ENCODE measurements at regions of chr17 and their contacts with region 1.

Region 1: GRCh38 chr17:8118769-8119580 is 661 bp upstream of the ALOXE3 start:
- DNase-seq: peak; percentile 78 to 92 (median 90)
- ATAC-seq: peak; percentile 76
- H3K4me3 ChIP-seq: peak overlapping the region; percentile 95
- H3K4me3 Mint-ChIP-seq: peak overlapping the region; percentile 88 to 99 (median 94)
- H3K27ac ChIP-seq: peak overlapping the region; percentile 64
- H3K27ac Mint-ChIP-seq: peak overlapping the region; percentile 94 to 100 (median 99)
- H3K4me1 ChIP-seq: peaks cover 44 to 46% of the 10 kb centered on the region in 2 donors
- H3K4me1 Mint-ChIP-seq: peaks cover 27 to 61% (median 53%) of the 10 kb centered on the region in 7 donors
- H3K27me3 ChIP-seq: peaks cover 0 to 12% of the 10 kb centered on the region in 2 donors
- H3K27me3 Mint-ChIP-seq: peaks cover 9 to 77% (median 45%) of the 10 kb centered on the region in 5 donors

Region 2: GRCh38 chr17:7834962-7835813 is 283.8 kb before region 1 on chr17:
- CTCF ChIA-PET with region 1: no interaction called
- POLR2A ChIA-PET with region 1: no interaction called
- intact Hi-C with region 1: loop called in 1 of 2 experiments (anchors 2 kb)
- DNase-seq: peak; percentile 76 to 97 (median 95)
- ATAC-seq: peak; percentile 70
- H3K4me3 ChIP-seq: peak overlapping the region; percentile 96
- H3K4me3 Mint-ChIP-seq: peak overlapping the region; percentile 91 to 99 (median 96)
- H3K27ac ChIP-seq: peak overlapping the region; percentile 96
- H3K27ac Mint-ChIP-seq: peak overlapping the region; percentile 95 to 100 (median 99)
- H3K4me1 ChIP-seq: peaks cover 29 to 38% of the 10 kb centered on the region in 2 donors
- H3K4me1 Mint-ChIP-seq: peaks cover 28 to 60% (median 44%) of the 10 kb centered on the region in 7 donors
- H3K27me3 ChIP-seq: no peaks in the 10 kb centered on the region
- H3K27me3 Mint-ChIP-seq: peaks cover 0 to 28% (median 0%) of the 10 kb centered on the region in 5 donors

Region 3: DNA sequence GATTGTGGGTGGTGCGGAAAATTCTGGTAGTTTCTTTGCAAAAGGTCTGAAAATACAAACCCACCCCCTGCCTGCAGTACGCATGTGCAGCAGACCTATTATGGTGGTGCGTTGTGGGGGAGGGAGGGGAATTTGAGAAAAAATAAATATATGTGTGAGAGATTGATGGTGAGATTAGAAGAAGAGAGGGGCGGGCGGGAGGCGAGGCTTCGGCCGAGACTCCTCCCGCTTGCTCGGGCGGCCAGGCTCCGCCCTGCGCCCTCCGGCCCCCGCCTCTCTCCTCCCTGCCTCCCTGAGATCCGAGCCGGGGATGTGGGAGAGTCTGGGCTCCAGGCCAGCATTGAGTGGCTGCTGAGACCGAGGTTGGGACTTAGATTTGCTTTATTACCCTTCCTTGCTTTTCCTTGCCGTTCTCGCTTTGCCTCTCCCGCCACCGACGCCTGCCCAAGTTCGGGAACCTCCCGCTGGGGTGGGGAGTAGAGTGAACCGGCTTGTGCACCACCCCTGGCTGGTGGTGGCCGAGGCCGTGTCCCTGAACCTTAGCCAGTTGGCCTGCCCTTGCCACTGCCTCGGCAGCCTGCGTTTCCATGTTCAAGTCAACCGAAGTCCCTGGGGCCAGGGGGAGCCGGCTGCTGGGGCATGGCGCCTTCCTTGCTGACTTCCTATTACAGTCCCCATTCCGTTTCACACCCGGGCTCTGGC is 231.3 kb before region 1 on chr17:
- CTCF ChIA-PET with region 1: no interaction called
- POLR2A ChIA-PET with region 1: interaction called, 3 read pairs
- intact Hi-C with region 1: loop called in 1 of 2 experiments (anchors 1 kb)
- DNase-seq: peak; percentile 41 to 96 (median 93)
- ATAC-seq: peak; percentile 83
- H3K4me3 ChIP-seq: peak overlapping the region; percentile 61
- H3K4me3 Mint-ChIP-seq: no peak overlapping the region
- H3K27ac ChIP-seq: peak overlapping the region; percentile 91
- H3K27ac Mint-ChIP-seq: no peak overlapping the region
- H3K4me1 ChIP-seq: peaks cover 28 to 29% of the 10 kb centered on the region in 2 donors
- H3K4me1 Mint-ChIP-seq: peaks cover 0 to 17% (median 8%) of the 10 kb centered on the region in 7 donors
- H3K27me3 ChIP-seq: no peaks in the 10 kb centered on the region
- H3K27me3 Mint-ChIP-seq: no peaks in the 10 kb centered on the region

Region 4: GRCh38 chr17:7931709-7932482 is 187.1 kb before region 1 on chr17 and contains the starts of genes CNTROB and TRAPPC1:
- CTCF ChIA-PET with region 1: no interaction called
- POLR2A ChIA-PET with region 1: no interaction called
- intact Hi-C with region 1: no loop called
- DNase-seq: peak; percentile 97 to 100 (median 99)
- ATAC-seq: peak; percentile 98
- H3K4me3 ChIP-seq: peak within 1 kb of the TSS; percentile 66
- H3K4me3 Mint-ChIP-seq: peak within 1 kb of the TSS; percentile 95 to 100 (median 96)
- H3K27ac ChIP-seq: peak within 1 kb of the TSS; percentile 88
- H3K27ac Mint-ChIP-seq: peak within 1 kb of the TSS; percentile 82 to 99 (median 96)
- H3K4me1 ChIP-seq: peaks cover 20 to 28% of the 10 kb centered on the region in 2 donors
- H3K4me1 Mint-ChIP-seq: peaks cover 31 to 60% (median 54%) of the 10 kb centered on the region in 7 donors
- H3K27me3 ChIP-seq: no peaks in the 10 kb centered on the region
- H3K27me3 Mint-ChIP-seq: no peaks in the 10 kb centered on the region
- total RNA-seq, gene CNTROB: 29.0 to 50.5 (median 33.6) TPM
- total RNA-seq, gene TRAPPC1: 71.4 to 216 (median 103) TPM

Region 5: DNA sequence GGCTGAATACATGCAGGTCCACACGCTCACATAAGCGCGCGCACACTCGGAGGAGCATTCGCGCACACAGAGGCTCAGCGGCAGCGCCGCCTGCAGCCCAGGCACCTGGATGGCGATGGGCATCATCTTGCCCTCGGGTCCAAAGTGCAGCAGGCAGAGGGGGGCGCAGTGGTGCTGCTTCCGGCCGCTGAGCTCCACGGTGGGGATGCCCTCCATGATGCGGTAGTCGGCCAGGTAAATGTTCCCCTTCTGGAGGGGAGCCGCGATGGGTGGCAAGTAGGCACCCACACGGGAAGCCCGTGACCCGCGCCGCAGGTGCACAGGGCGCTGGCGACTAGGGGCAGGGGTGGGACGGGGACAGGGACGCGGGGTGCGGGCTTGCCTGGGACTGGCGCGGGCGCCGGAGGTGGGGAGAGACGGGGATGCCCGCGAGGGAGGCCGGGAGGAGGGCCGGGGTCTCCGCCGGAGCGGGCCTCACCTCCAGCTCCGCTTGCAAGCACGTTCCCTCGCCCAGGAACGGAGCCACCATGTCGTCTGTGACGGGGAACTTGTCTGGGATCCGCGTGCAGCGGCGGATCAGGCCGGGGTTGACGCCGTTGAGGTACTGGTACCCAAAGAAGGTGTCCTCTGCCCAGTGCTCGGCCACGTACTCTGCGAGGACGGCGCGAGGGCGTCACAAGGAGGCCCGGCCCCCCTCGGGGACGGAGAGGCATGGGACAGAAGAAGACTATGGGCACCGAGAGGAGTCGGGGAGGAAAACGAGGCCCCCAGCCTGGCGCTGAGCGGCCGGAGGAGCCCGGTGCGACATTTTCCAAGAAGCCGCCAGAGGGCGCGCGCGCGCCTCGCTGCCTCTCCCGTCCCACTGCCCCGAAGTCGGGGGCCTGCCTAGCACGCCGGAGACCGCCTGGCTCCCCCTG is 39.4 kb before region 1 on chr17:
- CTCF ChIA-PET with region 1: interaction called, 248 read pairs
- POLR2A ChIA-PET with region 1: interaction called, 13 read pairs
- intact Hi-C with region 1: loop called (anchors 1 kb)
- DNase-seq: peak; percentile 63 to 89 (median 79)
- ATAC-seq: peak; percentile 90
- H3K4me3 ChIP-seq: peak overlapping the region; percentile 62
- H3K4me3 Mint-ChIP-seq: peak overlapping the region; percentile 88 to 93 (median 91)
- H3K27ac ChIP-seq: peak overlapping the region; percentile 62
- H3K27ac Mint-ChIP-seq: peak overlapping the region; percentile 42 to 92 (median 79)
- H3K4me1 ChIP-seq: peaks cover 13 to 14% of the 10 kb centered on the region in 2 donors
- H3K4me1 Mint-ChIP-seq: peaks cover 10 to 21% (median 18%) of the 10 kb centered on the region in 7 donors
- H3K27me3 ChIP-seq: peaks cover 0 to 4% of the 10 kb centered on the region in 2 donors
- H3K27me3 Mint-ChIP-seq: peaks cover 7 to 18% (median 9%) of the 10 kb centered on the region in 5 donors

Region 6: DNA sequence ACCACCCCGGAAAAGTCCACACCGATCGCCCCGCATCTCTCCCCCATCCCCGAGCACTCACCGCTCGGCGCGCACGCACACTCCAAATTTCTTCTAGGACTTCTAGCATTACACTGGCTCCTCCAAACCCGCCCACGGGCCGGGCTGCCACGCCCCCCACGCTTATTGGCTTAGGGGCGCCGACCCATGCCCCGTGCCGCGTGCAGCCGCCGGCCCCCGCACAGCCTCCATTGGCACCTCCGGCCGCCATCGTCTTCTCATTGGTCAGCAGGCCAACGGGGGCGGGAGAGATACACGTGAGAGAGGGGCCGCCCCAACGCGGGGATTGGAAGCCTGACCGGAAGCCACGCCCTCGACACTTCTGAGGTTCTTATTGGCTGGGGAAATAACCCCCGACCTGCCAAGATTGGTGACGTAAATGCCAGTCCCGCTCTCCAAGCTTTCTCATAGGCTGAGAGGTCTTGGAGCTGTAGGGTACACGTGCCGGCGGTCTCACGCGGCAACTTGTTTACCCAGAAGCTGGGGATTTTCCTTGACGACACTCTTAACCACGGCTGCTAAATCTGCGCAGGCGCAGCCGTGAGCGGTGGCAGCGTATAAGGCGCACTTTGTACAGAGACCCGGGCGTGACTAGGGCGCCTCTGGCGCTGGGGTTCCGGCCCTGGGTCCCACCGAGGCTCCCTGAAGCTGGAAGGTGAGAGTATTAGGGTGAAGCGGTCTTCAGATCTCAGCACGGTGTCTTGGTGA is 37.4 kb after region 1 on chr17:
- CTCF ChIA-PET with region 1: interaction called, 24 read pairs
- POLR2A ChIA-PET with region 1: interaction called, 28 read pairs
- intact Hi-C with region 1: loop called (anchors 1 kb)
- DNase-seq: peak; percentile 96 to 100 (median 100)
- ATAC-seq: peak; percentile 83
- H3K4me3 ChIP-seq: peak overlapping the region; percentile 93
- H3K4me3 Mint-ChIP-seq: no peak overlapping the region
- H3K27ac ChIP-seq: peak overlapping the region; percentile 97
- H3K27ac Mint-ChIP-seq: no peak overlapping the region
- H3K4me1 ChIP-seq: peaks cover 58 to 75% of the 10 kb centered on the region in 2 donors
- H3K4me1 Mint-ChIP-seq: peaks cover 33 to 73% (median 65%) of the 10 kb centered on the region in 7 donors
- H3K27me3 ChIP-seq: no peaks in the 10 kb centered on the region
- H3K27me3 Mint-ChIP-seq: no peaks in the 10 kb centered on the region

Region 7: DNA sequence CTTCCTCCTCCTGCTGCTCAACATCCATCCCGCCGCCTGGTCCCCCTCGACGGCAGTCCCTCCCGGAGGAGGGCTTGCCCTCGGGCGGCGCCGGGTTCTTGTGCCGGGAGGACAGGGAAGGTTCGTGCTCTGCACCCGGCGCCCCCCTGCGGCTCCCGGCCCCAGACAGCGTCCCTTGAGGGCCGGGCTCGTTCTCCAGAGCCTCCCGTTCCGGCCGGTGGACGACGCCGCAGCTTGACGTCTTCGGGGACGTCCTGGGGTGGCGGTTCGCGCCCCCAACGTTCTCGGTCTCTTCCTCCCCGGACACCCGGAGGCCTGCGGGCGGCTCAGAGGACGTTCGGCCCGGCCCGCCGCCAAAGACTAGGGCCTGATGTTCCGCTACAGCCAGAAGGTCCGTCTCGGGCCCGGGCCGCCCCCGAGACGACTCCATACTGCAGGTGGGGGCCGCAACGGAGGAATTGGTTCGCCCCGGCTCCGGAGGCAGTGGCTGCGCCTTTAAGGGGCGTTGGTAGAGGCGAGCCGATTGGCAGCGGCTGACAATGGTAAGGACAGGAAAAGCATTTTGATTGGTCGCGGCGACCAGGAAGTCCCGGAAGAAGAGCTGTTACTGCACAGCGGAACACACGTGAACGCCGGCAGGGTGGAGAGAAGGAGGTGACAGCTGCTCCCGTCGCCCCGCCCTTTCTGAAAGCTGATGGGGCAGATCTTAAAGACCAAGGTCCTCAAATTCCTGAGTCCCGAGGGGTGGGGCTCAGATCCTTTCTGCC is 70.9 kb after region 1 on chr17 and contains the start of gene BORCS6:
- CTCF ChIA-PET with region 1: interaction called, 29 read pairs
- POLR2A ChIA-PET with region 1: interaction called, 55 read pairs
- intact Hi-C with region 1: loop called (anchors 1 kb)
- DNase-seq: peak; percentile 76 to 97 (median 94)
- ATAC-seq: peak; percentile 81
- H3K4me3 ChIP-seq: peak within 1 kb of the TSS; percentile 91
- H3K4me3 Mint-ChIP-seq: peak within 1 kb of the TSS in 2 of 10 donors; percentile 15 to 49
- H3K27ac ChIP-seq: peak within 1 kb of the TSS; percentile 87
- H3K27ac Mint-ChIP-seq: peak within 1 kb of the TSS in 7 of 9 donors; percentile 46 to 94 (median 88)
- H3K4me1 ChIP-seq: peaks cover 33 to 38% of the 10 kb centered on the region in 2 donors
- H3K4me1 Mint-ChIP-seq: peaks cover 8 to 13% (median 13%) of the 10 kb centered on the region in 7 donors
- H3K27me3 ChIP-seq: no peaks in the 10 kb centered on the region
- H3K27me3 Mint-ChIP-seq: no peaks in the 10 kb centered on the region
- total RNA-seq, gene BORCS6: 5.4 to 16.1 (median 13.4) TPM

Region 8: DNA sequence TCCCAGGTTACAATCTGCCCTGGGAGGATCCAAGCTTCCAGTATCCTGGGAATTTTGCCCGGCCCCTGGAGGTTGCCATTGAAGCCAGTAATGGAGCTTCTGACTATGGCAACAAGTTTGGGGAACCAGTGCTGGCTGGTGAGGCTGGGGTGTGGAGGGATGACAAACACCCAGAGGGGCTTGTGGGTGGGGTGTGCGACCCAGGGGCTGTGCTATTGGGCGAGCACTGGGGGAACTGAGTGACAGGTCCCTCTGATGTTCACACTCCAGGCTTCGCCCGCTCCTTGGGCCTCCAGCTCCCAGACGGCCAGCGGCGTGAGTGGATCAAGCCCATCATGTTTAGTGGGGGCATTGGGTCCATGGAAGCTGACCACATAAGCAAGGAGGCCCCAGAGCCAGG is 138.8 kb after region 1 on chr17:
- CTCF ChIA-PET with region 1: no interaction called
- POLR2A ChIA-PET with region 1: no interaction called
- intact Hi-C with region 1: no loop called
- DNase-seq: no peak
- ATAC-seq: no peak
- H3K4me3 ChIP-seq: no peak overlapping the region
- H3K4me3 Mint-ChIP-seq: no peak overlapping the region
- H3K27ac ChIP-seq: no peak overlapping the region
- H3K27ac Mint-ChIP-seq: no peak overlapping the region
- H3K4me1 ChIP-seq: no peaks in the 10 kb centered on the region
- H3K4me1 Mint-ChIP-seq: peaks cover 0 to 3% (median 0%) of the 10 kb centered on the region in 7 donors
- H3K27me3 ChIP-seq: no peaks in the 10 kb centered on the region
- H3K27me3 Mint-ChIP-seq: no peaks in the 10 kb centered on the region

Measured in naive thymus-derived CD4-positive, alpha-beta T cell (primary cell).